GM12878 (cell line): ENCODE measurements at regions of chr2 and their contacts with region 1.

Region 1: DNA sequence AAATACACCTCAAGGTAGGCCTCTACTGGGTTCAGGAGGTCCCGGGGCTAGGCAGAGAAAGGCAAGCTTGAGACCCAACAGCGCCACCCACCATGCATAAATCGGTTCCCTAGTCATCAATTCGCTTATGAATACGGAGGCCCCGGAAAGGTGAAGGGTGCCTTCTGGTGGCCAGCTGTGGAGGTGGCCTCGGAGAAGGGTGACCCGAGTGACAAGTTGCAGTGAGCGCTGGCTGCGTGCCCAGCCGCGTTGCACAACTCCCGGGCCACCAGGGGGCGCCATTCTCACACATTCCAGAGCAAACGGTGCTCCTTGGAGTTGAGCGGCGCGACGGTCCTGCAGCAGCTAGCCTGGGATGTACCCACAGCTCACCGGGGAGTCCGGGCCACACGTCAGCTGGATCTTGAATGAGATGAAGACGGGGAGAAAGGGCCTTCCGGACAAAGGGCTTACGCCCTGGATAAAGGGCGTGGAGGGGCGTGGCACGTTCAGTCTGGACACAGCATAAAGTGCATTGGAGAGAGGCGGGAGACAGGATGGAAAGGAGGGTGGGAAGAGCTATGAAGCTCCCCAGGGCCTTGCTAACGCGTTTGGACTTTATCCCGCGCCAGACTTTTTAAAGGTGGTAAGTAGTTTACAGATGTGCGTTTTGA is 20.4 kb downstream of the TMSB10 start:
- DNase-seq: peak; percentile 92
- ATAC-seq: peak; percentile 82
- H3K4me3 ChIP-seq: peak overlapping the region; percentile 71
- H3K27ac ChIP-seq: peak overlapping the region; percentile 80
- H3K4me1 ChIP-seq: peaks cover 25% of the 10 kb centered on the region
- H3K27me3 ChIP-seq: no peaks in the 10 kb centered on the region
- CTCF ChIP-seq: peak; percentile 97 to 100 (median 100); a peak in 5 of 6 replicates
- EP300 ChIP-seq: no peak
- POLR2A ChIP-seq: peak; percentile 70
- RAD21 ChIP-seq: peak; percentile 89

Region 2: DNA sequence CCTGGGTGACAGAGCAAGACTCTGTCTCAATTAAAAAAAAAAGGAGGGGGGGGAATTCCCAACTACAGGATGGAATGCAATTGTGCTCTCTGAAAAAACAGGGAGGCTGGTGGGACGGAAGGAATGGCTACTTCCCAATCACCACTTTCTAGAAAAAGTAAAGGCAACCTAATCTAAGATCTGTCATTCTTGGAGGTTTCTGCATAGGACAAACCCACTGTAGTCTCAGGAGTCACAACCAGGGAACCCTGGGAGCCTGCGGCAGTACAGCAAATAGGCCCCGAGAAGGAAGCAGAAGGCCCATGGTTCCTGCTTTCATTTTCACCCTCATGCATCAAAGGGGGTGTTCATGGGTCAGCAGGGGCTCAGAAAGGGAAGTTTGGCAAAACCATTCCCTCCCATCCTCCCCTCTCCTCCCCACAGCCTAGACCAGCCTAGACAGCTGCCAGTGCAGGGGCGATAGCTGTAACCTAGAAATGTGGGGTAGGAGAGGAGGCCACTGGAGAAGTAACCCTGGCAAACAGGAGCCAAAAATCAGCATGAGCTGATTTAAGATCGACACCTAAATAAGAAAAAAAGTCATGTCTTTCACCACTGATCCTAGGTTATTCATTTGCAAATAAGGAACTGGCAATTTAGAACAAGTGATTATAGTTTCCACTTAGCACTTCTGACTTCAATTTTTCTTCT is 92.9 kb before region 1 on chr2:
- CTCF ChIA-PET with region 1: interaction called, 6 read pairs
- POLR2A ChIA-PET with region 1: no interaction called
- RAD21 ChIA-PET with region 1: interaction called, 12 read pairs
- SMC1A ChIA-PET with region 1: interaction called, 5 read pairs
- in situ Hi-C with region 1: no loop called
- intact Hi-C with region 1: no loop called
- DNase-seq: peak; percentile 13
- ATAC-seq: peak; percentile 84
- H3K4me3 ChIP-seq: 0 out of 2 replicates have a peak overlapping the region, but pooled peaks have one; percentile 36
- H3K27ac ChIP-seq: no peak overlapping the region
- H3K4me1 ChIP-seq: peaks cover 6% of the 10 kb centered on the region
- H3K27me3 ChIP-seq: no peaks in the 10 kb centered on the region
- CTCF ChIP-seq: no peak
- EP300 ChIP-seq: no peak
- POLR2A ChIP-seq: no peak
- RAD21 ChIP-seq: no peak

Region 3: GRCh38 chr2:84881581-84882414 is 44.1 kb before region 1 on chr2:
- CTCF ChIA-PET with region 1: interaction called, 133 read pairs
- POLR2A ChIA-PET with region 1: interaction called, 11 read pairs
- RAD21 ChIA-PET with region 1: interaction called, 74 read pairs
- SMC1A ChIA-PET with region 1: interaction called, 83 read pairs
- in situ Hi-C with region 1: no loop called
- intact Hi-C with region 1: loop called (anchors 1 kb)
- DNase-seq: no peak
- ATAC-seq: peak; percentile 71
- H3K4me3 ChIP-seq: peak overlapping the region; percentile 67
- H3K27ac ChIP-seq: no peak overlapping the region
- H3K4me1 ChIP-seq: peaks cover 16% of the 10 kb centered on the region
- H3K27me3 ChIP-seq: peaks cover 0 to 9% of the 10 kb centered on the region in 2 experiments; a peak in 3 of 4 replicates
- CTCF ChIP-seq: peak; percentile 59 to 76 (median 74)
- EP300 ChIP-seq: no peak
- POLR2A ChIP-seq: no peak
- RAD21 ChIP-seq: peak; percentile 66

Region 4: DNA sequence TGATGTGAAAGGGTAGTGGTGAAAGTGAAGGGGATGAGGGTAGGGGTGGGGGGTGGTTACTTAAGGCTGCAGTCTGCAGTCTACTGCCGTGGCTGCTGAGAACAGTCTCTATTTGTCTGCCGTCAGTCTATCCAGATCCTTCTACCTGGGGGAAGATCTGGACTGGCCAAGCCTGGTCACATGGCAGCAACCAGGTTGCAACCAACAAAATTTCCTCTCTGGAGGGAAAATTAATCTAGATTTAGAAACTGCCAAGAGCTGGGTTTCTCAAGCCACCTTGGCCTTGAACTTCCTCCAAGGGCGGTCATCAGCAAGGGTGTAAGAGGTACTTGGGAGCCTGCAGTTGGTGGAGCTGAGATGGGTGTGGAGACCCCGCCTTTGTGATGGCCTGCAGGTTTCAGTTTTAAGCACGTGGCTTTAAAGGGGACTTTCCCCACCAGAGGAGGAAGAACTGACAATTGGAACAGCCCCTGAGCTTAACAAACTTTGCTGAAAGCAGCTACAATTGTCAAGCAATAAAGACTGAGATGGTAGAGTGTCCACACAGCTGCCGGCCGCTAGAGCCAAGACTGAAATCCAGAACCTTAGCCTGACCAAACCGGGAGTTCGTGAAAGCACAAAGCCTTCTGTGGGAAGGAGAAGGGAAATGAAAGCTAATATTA is 13.7 kb after region 1 on chr2:
- CTCF ChIA-PET with region 1: interaction called, 275 read pairs
- POLR2A ChIA-PET with region 1: interaction called, 79 read pairs
- RAD21 ChIA-PET with region 1: interaction called, 160 read pairs
- SMC1A ChIA-PET with region 1: interaction called, 190 read pairs
- in situ Hi-C with region 1: no loop called
- intact Hi-C with region 1: loop called (anchors 1 kb)
- DNase-seq: peak; percentile 99
- ATAC-seq: peak; percentile 76
- H3K4me3 ChIP-seq: peak overlapping the region; percentile 57
- H3K27ac ChIP-seq: peak overlapping the region; percentile 100
- H3K4me1 ChIP-seq: peaks cover 50% of the 10 kb centered on the region
- H3K27me3 ChIP-seq: no peaks in the 10 kb centered on the region
- CTCF ChIP-seq: 0 out of 6 replicates have a peak, but pooled peaks of 1 of the 3 experiments have one; percentile 5
- EP300 ChIP-seq: peak; percentile 51 to 54; a peak in 3 of 4 replicates
- POLR2A ChIP-seq: peak; percentile 75
- RAD21 ChIP-seq: peak; percentile 13; the same call in 1 of the 2 replicates

Region 5: GRCh38 chr2:85001595-85001994 is 75.7 kb after region 1 on chr2:
- CTCF ChIA-PET with region 1: interaction called, 5 read pairs
- POLR2A ChIA-PET with region 1: interaction called, 5 read pairs
- RAD21 ChIA-PET with region 1: interaction called, 8 read pairs
- SMC1A ChIA-PET with region 1: interaction called, 16 read pairs
- in situ Hi-C with region 1: no loop called
- intact Hi-C with region 1: no loop called
- DNase-seq: no peak
- ATAC-seq: no peak
- H3K4me3 ChIP-seq: no peak overlapping the region
- H3K27ac ChIP-seq: no peak overlapping the region
- H3K4me1 ChIP-seq: peaks cover 10% of the 10 kb centered on the region
- H3K27me3 ChIP-seq: no peaks in the 10 kb centered on the region
- CTCF ChIP-seq: no peak
- EP300 ChIP-seq: no peak
- POLR2A ChIP-seq: no peak
- RAD21 ChIP-seq: no peak

Region 6: GRCh38 chr2:85066874-85067351 is 141.1 kb after region 1 on chr2:
- CTCF ChIA-PET with region 1: interaction called, 21 read pairs
- POLR2A ChIA-PET with region 1: no interaction called
- RAD21 ChIA-PET with region 1: interaction called, 4 read pairs
- SMC1A ChIA-PET with region 1: interaction called, 6 read pairs
- in situ Hi-C with region 1: no loop called
- intact Hi-C with region 1: no loop called
- DNase-seq: no peak
- ATAC-seq: peak; percentile 90
- H3K4me3 ChIP-seq: no peak overlapping the region
- H3K27ac ChIP-seq: no peak overlapping the region
- H3K4me1 ChIP-seq: no peaks in the 10 kb centered on the region
- H3K27me3 ChIP-seq: no peaks in the 10 kb centered on the region; a peak in 1 of 4 replicates
- CTCF ChIP-seq: peak; percentile 65 to 68 (median 66)
- EP300 ChIP-seq: no peak
- POLR2A ChIP-seq: no peak
- RAD21 ChIP-seq: peak; percentile 72

Region 7: GRCh38 chr2:85963068-85963467 is 1037.2 kb after region 1 on chr2:
- CTCF ChIA-PET with region 1: no interaction called
- POLR2A ChIA-PET with region 1: no interaction called
- RAD21 ChIA-PET with region 1: no interaction called
- SMC1A ChIA-PET with region 1: no interaction called
- in situ Hi-C with region 1: no loop called
- intact Hi-C with region 1: no loop called
- DNase-seq: no peak
- ATAC-seq: no peak
- H3K4me3 ChIP-seq: no peak overlapping the region
- H3K27ac ChIP-seq: no peak overlapping the region
- H3K4me1 ChIP-seq: no peaks in the 10 kb centered on the region; the same call in none of the 2 replicates
- H3K27me3 ChIP-seq: no peaks in the 10 kb centered on the region
- CTCF ChIP-seq: no peak
- EP300 ChIP-seq: no peak
- POLR2A ChIP-seq: no peak
- RAD21 ChIP-seq: no peak